Heart left ventricle (tissue), 16 donors: ENCODE measurements at regions of chr6 and their contacts with region 1.

Region 1: GRCh38 chr6:110682460-110682853 is 132.8 kb downstream of the CDK19 start:
- DNase-seq: peak in 3 of 5 donors; percentile 47 to 69 (median 66)
- ATAC-seq: peak; percentile 92 to 98 (median 96)
- H3K4me3 ChIP-seq: no peak overlapping the region
- H3K27ac ChIP-seq: peak overlapping the region in 9 of 12 donors; percentile 6 to 65 (median 41)
- H3K4me1 ChIP-seq: peaks cover 0 to 25% (median 10%) of the 10 kb centered on the region in 12 donors
- H3K27me3 ChIP-seq: no peaks in the 10 kb centered on the region
- CTCF ChIP-seq: peak; percentile 53 to 85 (median 73)
- POLR2A ChIP-seq: no peak

Region 2: DNA sequence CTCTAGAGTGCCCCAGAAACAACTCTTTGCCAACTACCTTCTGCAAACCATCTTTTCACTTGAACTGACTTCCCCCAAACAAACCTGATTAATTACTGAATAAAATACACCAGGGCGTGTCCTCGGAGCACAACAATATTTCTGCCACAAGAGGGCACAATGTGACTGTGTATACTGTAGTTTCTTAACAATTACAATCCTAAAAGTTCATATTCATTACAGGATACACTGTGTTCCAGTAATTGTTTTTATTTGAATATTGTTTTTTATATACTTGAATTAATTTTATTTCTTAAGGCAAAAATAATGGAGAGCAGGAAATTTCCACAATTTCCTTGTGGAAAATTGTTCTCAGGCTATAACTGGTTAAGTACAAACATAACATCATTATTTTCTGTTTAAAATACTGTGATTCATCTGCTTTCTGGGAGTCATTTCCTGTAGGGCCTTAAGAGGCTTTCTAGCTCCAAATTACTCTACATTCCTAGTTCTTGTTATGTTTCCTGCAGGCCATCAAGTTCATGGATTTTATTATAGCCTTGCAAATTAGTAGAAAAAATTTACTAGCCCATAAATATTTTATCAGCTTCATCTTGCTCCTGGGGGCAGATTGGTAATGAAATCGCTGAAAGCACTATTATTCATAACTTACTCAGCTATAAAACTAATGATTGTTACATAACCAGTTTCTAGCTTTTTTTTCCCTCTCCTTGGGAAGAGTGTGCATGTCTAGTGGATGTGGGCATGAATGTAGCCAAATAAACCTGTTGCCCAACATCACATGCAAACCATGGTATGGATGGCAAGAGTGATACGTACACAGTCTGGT is 154.1 kb before region 1 on chr6:
- intact Hi-C with region 1: loop called (anchors 5 to 10 kb)
- DNase-seq: peak in 4 of 5 donors; percentile 38 to 45 (median 41)
- ATAC-seq: peak; percentile 57 to 83 (median 79)
- H3K4me3 ChIP-seq: no peak overlapping the region
- H3K27ac ChIP-seq: peak overlapping the region in 6 of 12 donors; percentile 0 to 42 (median 26)
- H3K4me1 ChIP-seq: peaks cover 0 to 20% (median 5%) of the 10 kb centered on the region in 12 donors
- H3K27me3 ChIP-seq: no peaks in the 10 kb centered on the region
- CTCF ChIP-seq: peak; percentile 61 to 83 (median 78)
- POLR2A ChIP-seq: no peak

Region 3: GRCh38 chr6:110828396-110828795 is 145.9 kb after region 1 on chr6:
- intact Hi-C with region 1: no loop called
- DNase-seq: no peak
- ATAC-seq: no peak
- H3K4me3 ChIP-seq: no peak overlapping the region
- H3K27ac ChIP-seq: no peak overlapping the region
- H3K4me1 ChIP-seq: peaks cover 0 to 8% (median 0%) of the 10 kb centered on the region in 12 donors
- H3K27me3 ChIP-seq: no peaks in the 10 kb centered on the region
- CTCF ChIP-seq: no peak
- POLR2A ChIP-seq: no peak

Region 4: GRCh38 chr6:110873981-110874879 is 191.8 kb after region 1 on chr6 and contains the start of gene AMD1:
- intact Hi-C with region 1: loop called in 9 of 10 experiments (anchors 1 to 5 kb)
- DNase-seq: peak; percentile 98 to 99 (median 98)
- ATAC-seq: peak; percentile 92 to 95 (median 94)
- H3K4me3 ChIP-seq: peak within 1 kb of the TSS; percentile 74 to 95 (median 90)
- H3K27ac ChIP-seq: peak within 1 kb of the TSS; percentile 74 to 98 (median 94)
- H3K4me1 ChIP-seq: peaks cover 2 to 36% (median 29%) of the 10 kb centered on the region in 12 donors
- H3K27me3 ChIP-seq: no peaks in the 10 kb centered on the region
- CTCF ChIP-seq: no peak
- POLR2A ChIP-seq: peak; percentile 93 to 98
- total RNA-seq, gene AMD1: 44.5 to 85.6 (median 70.4) TPM

Region 5: DNA sequence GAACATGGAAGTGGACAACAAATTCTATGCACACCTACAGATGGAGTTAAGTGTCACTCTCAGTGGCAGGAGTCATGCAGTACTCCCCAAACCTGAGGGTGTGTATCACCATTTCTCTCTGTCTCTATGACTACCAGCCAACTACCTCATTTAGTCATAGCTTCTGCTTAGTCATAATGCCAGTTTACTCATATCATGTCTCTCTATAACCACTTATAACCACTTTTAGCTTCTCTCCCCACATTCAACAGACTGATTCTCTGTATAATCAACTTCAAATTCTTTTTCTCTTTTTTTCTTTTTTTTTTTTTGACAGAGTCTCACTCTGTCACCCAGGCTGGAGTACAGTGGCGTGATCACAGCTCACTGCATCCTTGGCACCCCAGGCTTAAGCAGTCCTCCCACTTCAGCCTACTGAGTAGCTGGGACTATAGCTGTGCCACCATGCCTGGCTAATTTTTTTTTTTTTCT is 262.3 kb after region 1 on chr6:
- intact Hi-C with region 1: loop called in 6 of 10 experiments (anchors 1 to 5 kb)
- DNase-seq: no peak
- ATAC-seq: peak in 2 of 4 donors; percentile 49 to 55
- H3K4me3 ChIP-seq: no peak overlapping the region
- H3K27ac ChIP-seq: no peak overlapping the region
- H3K4me1 ChIP-seq: peaks cover 0 to 18% (median 0%) of the 10 kb centered on the region in 12 donors
- H3K27me3 ChIP-seq: no peaks in the 10 kb centered on the region
- CTCF ChIP-seq: no peak
- POLR2A ChIP-seq: no peak

Region 6: GRCh38 chr6:110999634-111000270 is 317.3 kb after region 1 on chr6:
- intact Hi-C with region 1: loop called in 1 of 10 experiments (anchors 5 kb)
- DNase-seq: no peak
- ATAC-seq: no peak
- H3K4me3 ChIP-seq: no peak overlapping the region
- H3K27ac ChIP-seq: no peak overlapping the region
- H3K4me1 ChIP-seq: no peaks in the 10 kb centered on the region
- H3K27me3 ChIP-seq: no peaks in the 10 kb centered on the region
- CTCF ChIP-seq: peak in 11 of 12 donors; percentile 15 to 58 (median 45)
- POLR2A ChIP-seq: no peak